ENCODE measurements at regions of chr2 and their contacts with region 1.

Region 1: DNA sequence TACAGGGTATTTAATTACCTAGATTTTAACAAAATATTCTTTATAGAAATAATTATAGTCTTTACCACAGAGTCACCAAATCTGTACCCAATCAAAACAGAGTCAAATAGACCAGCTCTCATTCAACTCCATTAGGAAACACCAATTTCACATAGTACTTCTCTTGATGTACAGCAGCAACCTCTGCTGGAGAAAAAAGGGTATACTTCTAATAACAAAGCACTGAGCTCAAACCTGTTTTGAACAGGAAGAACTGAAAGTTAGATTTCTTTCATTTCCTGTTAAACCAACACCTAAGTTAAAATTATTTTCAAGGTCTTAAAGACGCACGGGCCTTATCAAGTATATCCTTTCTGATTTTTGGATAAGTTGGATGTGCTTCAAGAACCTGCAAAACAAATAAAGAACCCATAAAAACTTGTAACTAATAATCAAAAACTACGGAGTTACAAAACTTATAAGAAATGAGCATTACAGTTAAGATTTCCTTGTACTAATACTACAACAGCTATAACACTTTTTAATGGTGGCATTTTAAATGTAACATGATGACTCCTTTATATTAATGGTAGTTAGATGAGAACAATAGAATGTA is 79.0 kb downstream of the TTC21B start:
- DNase-seq: peak; percentile 72
- ATAC-seq: peak; percentile 80
- H3K4me3 ChIP-seq: no peak overlapping the region
- H3K27ac ChIP-seq: no peak overlapping the region
- H3K4me1 ChIP-seq: peaks cover 13% of the 10 kb centered on the region
- H3K27me3 ChIP-seq: no peaks in the 10 kb centered on the region
- CTCF ChIP-seq: peak; percentile 68
- EP300 ChIP-seq: no peak
- POLR2A ChIP-seq: no peak
- RAD21 ChIP-seq: peak; percentile 36; the same call in 1 of the 2 replicates

Region 2: DNA sequence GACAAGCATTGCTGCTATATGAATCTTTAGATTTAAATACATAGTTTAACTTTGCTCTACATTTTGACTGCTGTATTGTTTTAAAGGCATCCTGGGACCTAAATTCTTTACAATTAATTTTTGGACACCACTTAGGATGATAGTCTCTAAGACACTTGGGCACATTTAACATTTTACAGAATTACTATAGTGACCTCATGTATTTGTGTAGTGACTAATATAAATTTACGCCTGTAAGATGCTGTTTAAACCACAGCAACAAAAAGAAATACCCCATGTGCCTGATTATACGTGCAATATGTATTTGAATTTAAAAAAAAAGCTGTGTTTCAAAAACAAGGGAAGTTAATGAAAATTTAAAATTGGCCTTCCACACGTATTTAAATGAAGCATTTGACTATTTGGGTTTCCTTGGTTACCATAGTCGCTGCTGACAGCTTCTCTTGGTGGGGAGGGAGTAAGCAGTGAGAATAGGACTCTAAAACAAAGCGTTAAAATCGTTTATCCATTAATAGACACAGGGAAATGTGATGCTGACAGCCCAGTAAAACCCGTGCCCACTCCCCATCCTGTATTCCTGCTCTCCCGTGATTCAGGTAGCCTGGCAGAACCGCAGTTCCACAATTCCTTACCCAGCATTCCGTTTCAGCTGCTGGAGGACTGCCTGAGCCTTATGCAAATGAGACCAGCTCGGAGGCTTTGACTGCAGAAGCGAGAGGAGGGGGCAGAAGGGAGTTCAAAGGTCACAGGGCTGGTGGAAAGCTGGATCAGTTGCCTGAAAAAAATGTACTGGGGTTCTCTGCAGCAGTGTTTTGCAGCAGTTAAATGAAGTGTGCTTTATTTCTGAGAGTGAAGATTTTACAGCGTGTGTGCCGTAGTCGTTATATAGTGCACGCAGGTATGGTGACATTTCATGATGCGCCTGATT is 300.7 kb before region 1 on chr2:
- CTCF ChIA-PET with region 1: no interaction called
- POLR2A ChIA-PET with region 1: no interaction called
- in situ Hi-C with region 1: no loop called
- intact Hi-C with region 1: loop called (anchors 10 kb)
- DNase-seq: peak; percentile 78
- ATAC-seq: peak; percentile 100
- H3K4me3 ChIP-seq: peak overlapping the region in 2 of 3 experiments; percentile 2 to 42; a peak in 4 of 6 replicates
- H3K27ac ChIP-seq: no peak overlapping the region
- H3K4me1 ChIP-seq: peaks cover 14% of the 10 kb centered on the region
- H3K27me3 ChIP-seq: no peaks in the 10 kb centered on the region
- CTCF ChIP-seq: no peak
- EP300 ChIP-seq: no peak
- POLR2A ChIP-seq: no peak
- RAD21 ChIP-seq: no peak

Measured in HepG2 (cell line).